ENCODE measurements at regions of chr5 and their contacts with region 1.

Region 1: GRCh38 chr5:1641560-1642166 is 117.9 kb upstream of the LPCAT1 start:
- DNase-seq: peak; percentile 68 to 72 (median 69)
- H3K4me3 ChIP-seq: no peak overlapping the region
- H3K4me3 Mint-ChIP-seq: peak overlapping the region in 1 of 2 donors; percentile 14
- H3K27ac ChIP-seq: no peak overlapping the region
- H3K27ac Mint-ChIP-seq: no peak overlapping the region
- H3K4me1 ChIP-seq: peaks cover 3 to 4% of the 10 kb centered on the region in 2 donors
- H3K4me1 Mint-ChIP-seq: peaks cover 9% of the 10 kb centered on the region
- H3K27me3 ChIP-seq: peaks cover 10 to 34% of the 10 kb centered on the region in 2 donors
- H3K27me3 Mint-ChIP-seq: peaks cover 33 to 56% (median 39%) of the 10 kb centered on the region in 3 donors
- CTCF ChIP-seq: peak; percentile 92

Region 2: DNA sequence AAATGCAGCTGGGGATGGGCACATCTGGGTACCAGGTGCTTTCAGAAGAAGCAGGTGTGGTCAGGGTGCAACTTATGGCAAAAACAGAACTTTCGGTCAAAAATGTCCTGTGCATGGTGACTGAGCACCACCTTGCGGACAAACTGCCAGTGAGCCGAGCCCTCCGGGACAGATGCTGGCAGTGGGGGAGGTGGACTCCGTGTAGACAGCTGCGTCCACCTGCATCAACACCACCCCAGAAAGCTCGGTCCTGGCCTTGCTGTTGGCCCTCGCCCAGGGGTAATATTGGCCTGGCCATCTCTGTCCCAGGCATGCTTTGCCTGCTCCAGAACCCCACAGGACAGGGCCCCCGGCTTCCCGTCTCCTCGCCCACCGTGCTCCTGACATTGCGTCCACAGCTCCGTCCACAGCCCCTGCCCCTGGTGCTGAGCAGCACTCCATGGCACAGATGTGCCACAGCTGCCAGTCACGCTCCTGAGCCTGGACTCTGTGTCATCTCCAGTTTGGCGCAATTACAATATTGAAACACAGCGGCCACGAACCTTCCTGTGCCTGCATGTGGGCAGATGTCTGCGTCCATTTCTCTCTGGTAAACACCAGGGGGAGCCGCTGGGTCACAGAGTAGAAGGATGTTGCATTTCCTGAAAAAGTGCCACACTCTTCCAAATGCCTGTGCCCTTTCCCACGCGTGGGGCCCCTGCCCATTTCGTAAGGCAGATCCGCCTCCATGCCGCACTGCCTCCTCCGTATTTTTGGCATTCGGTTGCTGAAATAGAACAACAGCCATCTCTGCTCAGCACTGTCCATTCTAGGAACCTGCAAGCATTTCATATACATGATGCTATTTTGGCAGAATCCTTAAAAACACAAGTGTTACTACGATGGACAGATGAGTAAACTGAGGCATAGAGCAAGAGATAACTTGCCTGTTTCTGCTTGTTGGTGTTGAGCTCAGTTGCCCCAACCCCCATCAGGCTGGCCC is 473.6 kb before region 1 on chr5:
- intact Hi-C with region 1: loop called (anchors 1 kb)
- DNase-seq: peak; percentile 46 to 69 (median 64)
- H3K4me3 ChIP-seq: no peak overlapping the region
- H3K4me3 Mint-ChIP-seq: peak overlapping the region in 1 of 2 donors; percentile 71
- H3K27ac ChIP-seq: no peak overlapping the region
- H3K27ac Mint-ChIP-seq: peak overlapping the region in 1 of 7 donors; percentile 30
- H3K4me1 ChIP-seq: peaks cover 12 to 13% of the 10 kb centered on the region in 2 donors
- H3K4me1 Mint-ChIP-seq: peaks cover 11% of the 10 kb centered on the region
- H3K27me3 ChIP-seq: peaks cover 0 to 8% of the 10 kb centered on the region in 2 donors
- H3K27me3 Mint-ChIP-seq: peaks cover 11 to 23% (median 13%) of the 10 kb centered on the region in 3 donors
- CTCF ChIP-seq: peak; percentile 83

Region 3: DNA sequence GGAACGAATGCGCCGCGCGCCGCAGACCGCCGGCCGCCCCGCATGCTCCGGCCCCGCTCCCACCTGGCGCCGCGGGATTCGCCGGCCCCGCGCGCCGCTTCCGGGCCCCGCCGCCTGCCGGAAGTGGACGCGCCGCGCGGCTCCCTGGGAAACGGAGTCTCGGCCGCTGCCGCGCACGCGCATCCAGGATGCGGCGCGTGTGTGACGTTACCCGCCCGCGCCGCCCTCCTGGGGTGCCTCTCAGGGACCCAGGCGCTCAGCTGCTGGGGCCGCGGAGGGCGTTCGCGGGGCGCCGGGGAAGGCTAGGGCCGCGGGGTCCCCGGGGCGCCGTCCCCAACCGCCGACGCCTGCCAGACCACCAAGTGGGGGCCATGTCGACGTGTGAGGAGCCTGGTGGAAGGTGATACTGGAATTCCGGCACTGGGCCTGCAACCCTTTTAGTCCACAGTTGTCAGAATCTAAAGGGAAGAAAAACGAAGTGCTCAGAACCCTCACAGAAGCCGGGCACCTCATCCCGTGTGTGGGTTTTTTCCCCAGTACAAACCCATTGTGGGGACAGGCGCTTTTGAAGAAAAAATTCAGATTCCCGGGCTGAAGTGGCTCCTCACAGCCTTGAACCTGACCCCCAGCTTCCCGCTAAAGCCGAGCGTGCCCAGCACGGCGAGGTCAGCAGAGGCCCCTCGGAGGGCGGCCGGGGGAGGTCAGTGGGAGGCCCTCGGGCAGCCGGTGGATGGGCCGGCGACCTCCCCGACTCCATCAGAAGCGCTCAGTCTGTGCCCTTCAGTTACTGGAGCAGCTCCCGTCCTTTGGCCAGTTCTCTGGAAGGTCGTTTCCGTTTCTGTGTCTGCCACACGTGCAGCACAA is 296.5 kb before region 1 on chr5 and contains the start of gene CLPTM1L:
- intact Hi-C with region 1: loop called in 1 of 2 experiments (anchors 5 kb)
- DNase-seq: peak; percentile 87 to 88 (median 87)
- H3K4me3 ChIP-seq: peak within 1 kb of the TSS; percentile 87 to 97 (median 93)
- H3K4me3 Mint-ChIP-seq: peak within 1 kb of the TSS; percentile 85 to 90
- H3K27ac ChIP-seq: peak within 1 kb of the TSS; percentile 58 to 95
- H3K27ac Mint-ChIP-seq: peak within 1 kb of the TSS; percentile 19 to 84 (median 63)
- H3K4me1 ChIP-seq: peaks cover 16 to 30% of the 10 kb centered on the region in 2 donors
- H3K4me1 Mint-ChIP-seq: peaks cover 26% of the 10 kb centered on the region
- H3K27me3 ChIP-seq: no peaks in the 10 kb centered on the region
- H3K27me3 Mint-ChIP-seq: peaks cover 0 to 2% (median 0%) of the 10 kb centered on the region in 3 donors
- CTCF ChIP-seq: no peak
- polyA plus RNA-seq, gene CLPTM1L: 14.1 to 76.2 (median 35.0) TPM

Region 4: DNA sequence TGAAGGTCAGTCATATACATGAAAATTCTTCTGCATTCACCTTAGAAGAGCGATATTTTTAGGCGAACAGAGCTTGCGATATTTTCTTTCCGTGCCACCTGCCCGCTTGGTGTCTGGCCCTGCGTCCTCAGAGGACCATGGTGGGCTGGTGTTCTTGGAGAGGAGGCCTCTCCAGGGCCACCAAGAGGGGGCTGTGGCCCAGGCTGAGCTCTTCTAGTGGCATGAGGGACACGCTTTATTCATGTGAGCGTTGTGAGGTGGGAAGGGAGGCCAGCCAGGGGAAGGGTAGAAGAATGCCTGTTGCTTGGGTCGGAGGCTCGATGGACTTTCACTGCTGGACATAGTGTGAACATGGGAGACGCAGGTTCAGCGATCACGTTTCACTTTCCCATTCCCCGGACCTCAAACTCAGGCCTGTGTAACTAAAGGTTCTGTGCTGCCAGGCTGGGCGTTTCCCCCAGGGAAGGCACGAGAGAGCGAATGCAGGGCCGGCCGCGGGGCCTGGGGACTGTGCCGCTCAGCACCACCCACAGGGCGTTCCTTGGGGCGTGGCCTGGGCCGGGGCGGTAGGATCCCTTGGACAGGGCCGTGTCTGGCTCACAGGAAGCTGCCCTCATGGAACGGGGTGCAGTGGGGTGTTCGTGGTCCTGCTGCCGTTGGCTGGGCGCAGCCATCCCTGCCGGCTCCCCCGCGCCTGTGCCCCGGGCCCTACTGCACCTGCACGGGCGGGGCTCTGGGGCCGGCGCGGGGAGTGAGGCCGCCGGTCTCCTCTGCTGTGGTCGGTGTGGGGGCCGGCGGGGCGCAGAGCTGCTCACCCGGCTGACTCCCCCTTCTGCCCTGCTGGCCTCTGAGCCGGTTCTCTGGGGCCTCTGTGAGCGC is 256.0 kb before region 1 on chr5:
- intact Hi-C with region 1: loop called (anchors 10 kb)
- DNase-seq: peak; percentile 69 to 80 (median 73)
- H3K4me3 ChIP-seq: peak overlapping the region; percentile 44 to 78 (median 57)
- H3K4me3 Mint-ChIP-seq: peak overlapping the region; percentile 90 to 98
- H3K27ac ChIP-seq: peak overlapping the region; percentile 69 to 72
- H3K27ac Mint-ChIP-seq: peak overlapping the region; percentile 88 to 97 (median 94)
- H3K4me1 ChIP-seq: peaks cover 16 to 19% of the 10 kb centered on the region in 2 donors
- H3K4me1 Mint-ChIP-seq: peaks cover 22% of the 10 kb centered on the region
- H3K27me3 ChIP-seq: peaks cover 0 to 29% of the 10 kb centered on the region in 2 donors
- H3K27me3 Mint-ChIP-seq: peaks cover 37 to 48% (median 44%) of the 10 kb centered on the region in 3 donors
- CTCF ChIP-seq: no peak

Region 5: DNA sequence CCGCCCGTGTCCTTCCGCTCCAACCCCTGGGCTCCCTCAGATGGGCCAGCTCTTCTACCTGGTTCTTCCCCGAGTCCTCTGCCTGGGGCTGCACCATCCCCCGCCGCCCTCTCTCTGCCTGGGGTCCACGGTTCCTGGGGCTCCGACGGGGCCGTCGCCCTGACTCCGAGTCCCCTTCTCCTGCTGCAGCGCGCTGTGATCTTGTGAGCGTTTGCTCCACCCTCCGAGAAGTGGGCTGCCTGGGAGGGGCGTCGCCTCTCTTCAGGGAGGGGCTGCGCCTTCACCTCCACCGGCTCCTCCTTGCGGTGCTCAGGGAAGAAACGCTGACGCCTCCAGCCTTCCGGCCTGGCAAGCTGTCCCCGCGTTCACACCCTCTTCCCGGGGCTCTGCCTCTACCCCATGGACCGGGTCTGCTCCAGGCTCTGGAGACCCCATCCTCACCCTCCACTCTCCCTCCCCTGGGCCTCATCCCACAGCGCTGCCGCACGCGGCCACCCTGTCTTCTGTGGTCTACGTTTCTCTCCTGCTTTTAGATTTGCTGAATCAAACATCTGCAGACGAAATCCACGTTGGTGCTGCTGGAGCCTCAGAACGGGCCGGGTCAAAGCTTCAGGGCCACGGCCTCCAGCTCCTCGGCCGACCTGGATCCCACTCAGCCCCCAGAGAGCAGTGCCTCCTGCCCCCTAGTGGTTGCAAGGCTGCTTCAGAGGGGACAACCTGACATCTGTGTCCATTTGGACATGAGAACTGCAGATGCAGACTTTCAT is 173.7 kb before region 1 on chr5:
- intact Hi-C with region 1: loop called in 1 of 2 experiments (anchors 10 kb)
- DNase-seq: no peak
- H3K4me3 ChIP-seq: no peak overlapping the region
- H3K4me3 Mint-ChIP-seq: no peak overlapping the region
- H3K27ac ChIP-seq: no peak overlapping the region
- H3K27ac Mint-ChIP-seq: peak overlapping the region in 4 of 7 donors; percentile 37 to 56 (median 52)
- H3K4me1 ChIP-seq: no peaks in the 10 kb centered on the region
- H3K4me1 Mint-ChIP-seq: peaks cover 2% of the 10 kb centered on the region
- H3K27me3 ChIP-seq: no peaks in the 10 kb centered on the region
- H3K27me3 Mint-ChIP-seq: no peaks in the 10 kb centered on the region
- CTCF ChIP-seq: peak; percentile 53

Measured in CD14-positive monocyte (primary cell).